ENCODE measurements at regions of chr17 and their contacts with region 1.

Region 1: GRCh38 chr17:35849469-35850348 is 19.0 kb downstream of the HEATR9 start:
- DNase-seq: peak; percentile 48 to 82 (median 54)
- ATAC-seq: peak; percentile 92
- H3K4me3 ChIP-seq: no peak overlapping the region
- H3K27ac ChIP-seq: no peak overlapping the region
- H3K4me1 ChIP-seq: no peaks in the 10 kb centered on the region
- H3K27me3 ChIP-seq: no peaks in the 10 kb centered on the region
- CTCF ChIP-seq: peak; percentile 77 to 90 (median 81)
- EP300 ChIP-seq: no peak
- POLR2A ChIP-seq: no peak
- RAD21 ChIP-seq: peak; percentile 54 to 84

Region 2: GRCh38 chr17:36059406-36059805 is 209.7 kb after region 1 on chr17:
- CTCF ChIA-PET with region 1: no interaction called
- POLR2A ChIA-PET with region 1: no interaction called
- in situ Hi-C with region 1: no loop called
- intact Hi-C with region 1: no loop called
- DNase-seq: no peak
- ATAC-seq: no peak
- H3K4me3 ChIP-seq: no peak overlapping the region
- H3K27ac ChIP-seq: no peak overlapping the region
- H3K4me1 ChIP-seq: no peaks in the 10 kb centered on the region
- H3K27me3 ChIP-seq: peaks cover 0 to 4% of the 10 kb centered on the region in 2 experiments; a peak in 2 of 5 replicates
- CTCF ChIP-seq: no peak
- EP300 ChIP-seq: no peak
- POLR2A ChIP-seq: no peak
- RAD21 ChIP-seq: no peak

Region 3: GRCh38 chr17:36072431-36073121 is 222.9 kb after region 1 on chr17:
- CTCF ChIA-PET with region 1: interaction called, 5 read pairs
- POLR2A ChIA-PET with region 1: no interaction called
- in situ Hi-C with region 1: no loop called
- intact Hi-C with region 1: loop called (anchors 10 kb)
- DNase-seq: peak; percentile 78 to 80 (median 78)
- ATAC-seq: peak; percentile 91
- H3K4me3 ChIP-seq: no peak overlapping the region
- H3K27ac ChIP-seq: no peak overlapping the region
- H3K4me1 ChIP-seq: no peaks in the 10 kb centered on the region; a peak in 1 of 5 replicates
- H3K27me3 ChIP-seq: peaks cover 2 to 14% of the 10 kb centered on the region in 2 experiments; a peak in 4 of 5 replicates
- CTCF ChIP-seq: peak; percentile 73 to 87 (median 82)
- EP300 ChIP-seq: no peak
- POLR2A ChIP-seq: no peak
- RAD21 ChIP-seq: peak in 1 of 2 experiments; percentile 62; a peak in 2 of 4 replicates

Region 4: GRCh38 chr17:36148559-36149295 is 299.0 kb after region 1 on chr17:
- CTCF ChIA-PET with region 1: interaction called, 5 read pairs
- POLR2A ChIA-PET with region 1: interaction called, 3 read pairs
- in situ Hi-C with region 1: no loop called
- intact Hi-C with region 1: loop called (anchors 10 kb)
- DNase-seq: peak; percentile 70 to 86 (median 85)
- ATAC-seq: peak; percentile 98
- H3K4me3 ChIP-seq: no peak overlapping the region
- H3K27ac ChIP-seq: no peak overlapping the region
- H3K4me1 ChIP-seq: peaks cover 3 to 5% of the 10 kb centered on the region in 2 experiments; a peak in 2 of 5 replicates
- H3K27me3 ChIP-seq: peaks cover 2 to 10% of the 10 kb centered on the region in 2 experiments; a peak in 2 of 5 replicates
- CTCF ChIP-seq: peak; percentile 93 to 97 (median 97)
- EP300 ChIP-seq: no peak
- POLR2A ChIP-seq: no peak
- RAD21 ChIP-seq: peak; percentile 78 to 88

Measured in K562 (cell line).